Dendritic cell treated with granulocyte-macrophage colony-stimulating factor and Interleukin-4, amounts not matched to agents 40 ng/mL and 50 ng/mL, for 4 days (primary cell): ENCODE measurements at regions of chr10 and their contacts with region 1.

Region 1: GRCh38 chr10:63629363-63630084 is 108.3 kb downstream of the REEP3 start:
- H3K4me3 Mint-ChIP-seq: peak overlapping the region; percentile 88
- H3K27ac Mint-ChIP-seq: peak overlapping the region; percentile 79
- H3K4me1 Mint-ChIP-seq: peaks cover 42% of the 10 kb centered on the region
- H3K27me3 Mint-ChIP-seq: peaks cover 36% of the 10 kb centered on the region

Region 2: GRCh38 chr10:63217120-63217605 is 412.4 kb before region 1 on chr10:
- intact Hi-C with region 1: loop called (anchors 1 kb)
- H3K4me3 Mint-ChIP-seq: no peak overlapping the region
- H3K27ac Mint-ChIP-seq: no peak overlapping the region
- H3K4me1 Mint-ChIP-seq: peaks cover 47% of the 10 kb centered on the region
- H3K27me3 Mint-ChIP-seq: no peaks in the 10 kb centered on the region

Region 3: DNA sequence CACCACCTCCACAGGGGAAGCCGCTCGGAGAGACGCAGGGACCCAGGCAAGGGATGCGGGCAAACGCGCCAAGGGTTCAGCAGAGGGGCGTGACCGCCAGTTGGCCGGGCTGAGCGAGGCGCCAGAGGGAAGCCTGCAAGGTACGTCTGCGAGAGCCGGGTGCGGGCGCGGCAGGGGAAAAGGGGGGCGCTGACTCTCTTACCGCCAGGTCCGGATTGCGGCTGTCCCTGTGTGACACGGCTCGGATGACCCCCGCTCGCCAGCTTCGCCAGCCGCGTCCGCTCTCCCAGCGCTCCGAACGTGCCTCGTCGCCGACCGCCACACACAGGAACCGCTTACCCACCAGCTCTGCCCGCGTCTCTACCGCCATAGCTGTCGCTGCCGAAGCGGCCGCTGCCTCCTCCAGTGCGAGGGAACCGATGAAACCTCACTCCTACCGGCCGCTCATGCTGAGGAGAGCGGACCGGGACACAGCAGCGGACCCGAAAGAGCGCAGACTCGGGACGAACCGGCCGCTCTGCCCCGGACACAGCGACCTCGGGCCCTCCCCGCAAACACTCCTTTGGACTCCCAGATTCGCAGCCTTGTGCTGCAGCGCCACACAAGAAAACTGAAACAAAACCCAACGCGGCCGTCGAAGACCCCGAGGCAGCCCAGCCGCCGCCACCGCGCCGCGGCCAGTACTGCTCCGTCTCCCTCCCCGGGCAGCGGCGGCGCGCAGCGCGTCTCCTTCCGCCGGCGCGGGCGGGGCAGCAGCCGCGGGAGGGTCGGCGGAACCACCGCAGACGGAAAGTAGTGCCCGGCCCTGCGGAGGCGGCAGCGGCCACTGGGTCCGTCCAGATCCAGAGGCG is 164.0 kb before region 1 on chr10 and contains the start of gene JMJD1C:
- intact Hi-C with region 1: loop called (anchors 2 kb)
- H3K4me3 Mint-ChIP-seq: peak within 1 kb of the TSS; percentile 99
- H3K27ac Mint-ChIP-seq: peak within 1 kb of the TSS; percentile 95
- H3K4me1 Mint-ChIP-seq: peaks cover 27% of the 10 kb centered on the region
- H3K27me3 Mint-ChIP-seq: peaks cover 11% of the 10 kb centered on the region

Region 4: GRCh38 chr10:63646503-63646902 is 17.0 kb after region 1 on chr10:
- intact Hi-C with region 1: no loop called
- H3K4me3 Mint-ChIP-seq: no peak overlapping the region
- H3K27ac Mint-ChIP-seq: no peak overlapping the region
- H3K4me1 Mint-ChIP-seq: peaks cover 10% of the 10 kb centered on the region
- H3K27me3 Mint-ChIP-seq: peaks cover 4% of the 10 kb centered on the region

Region 5: DNA sequence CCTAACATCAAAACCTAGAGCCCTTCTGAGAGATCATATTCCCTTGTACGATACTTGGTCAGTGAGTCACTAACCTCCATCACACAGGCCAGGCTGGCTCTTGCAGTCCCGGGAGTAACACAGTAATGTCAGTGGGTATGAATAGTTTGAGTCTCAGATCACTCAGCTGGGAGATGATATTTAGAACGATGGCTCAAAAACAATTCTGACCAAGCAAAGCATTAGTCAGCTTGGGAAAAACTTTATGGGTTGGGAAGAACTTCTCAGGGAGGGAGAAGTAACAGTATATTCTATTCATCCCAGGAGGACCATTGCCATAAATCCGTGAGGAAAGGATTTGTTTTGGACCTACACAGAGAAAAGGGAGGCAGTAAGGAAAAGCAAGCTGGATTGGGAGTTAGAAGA is 70.7 kb after region 1 on chr10:
- intact Hi-C with region 1: loop called (anchors 5 kb)
- H3K4me3 Mint-ChIP-seq: no peak overlapping the region
- H3K27ac Mint-ChIP-seq: peak overlapping the region; percentile 57
- H3K4me1 Mint-ChIP-seq: peaks cover 41% of the 10 kb centered on the region
- H3K27me3 Mint-ChIP-seq: no peaks in the 10 kb centered on the region